ENCODE measurements at regions of chr12 and their contacts with region 1.

Region 1: DNA sequence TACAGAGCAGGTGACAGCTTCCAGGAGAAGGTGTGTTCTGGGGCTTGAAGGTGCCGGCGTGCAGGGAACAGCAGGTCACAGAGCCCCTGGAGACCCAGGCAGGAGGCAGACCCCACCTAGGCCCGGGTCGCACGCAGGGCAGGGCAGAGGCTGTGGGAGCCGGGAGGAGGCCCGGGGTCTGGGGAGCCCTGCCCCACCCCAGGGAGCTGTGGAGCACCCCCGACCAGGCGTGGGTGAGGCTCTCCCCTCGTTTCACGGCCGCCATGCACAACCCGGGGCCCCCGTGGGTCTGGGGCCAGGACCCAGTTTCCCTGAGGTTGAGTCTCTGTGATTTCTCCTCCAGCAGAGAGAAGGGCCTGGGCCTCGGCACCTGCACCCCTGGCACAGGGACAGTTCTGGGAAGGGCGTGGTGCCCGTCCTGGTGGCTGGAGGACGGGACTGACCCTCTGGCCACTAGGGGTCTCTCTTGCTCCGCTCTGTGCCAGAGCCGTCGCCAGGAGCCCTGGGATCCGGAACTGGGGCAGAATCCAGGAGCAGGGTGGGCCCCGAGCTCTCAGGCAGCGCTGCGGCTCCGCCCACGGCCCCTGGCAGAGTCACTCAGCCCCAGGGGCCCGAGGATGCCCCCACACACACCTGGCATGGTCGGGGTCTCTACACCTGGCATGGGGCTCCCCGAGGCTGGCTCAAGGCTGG is 75.2 kb upstream of the FBRSL1 start:
- DNase-seq: peak; percentile 80 to 88
- ATAC-seq: peak; percentile 87 to 98
- H3K4me3 ChIP-seq: no peak overlapping the region
- H3K27ac ChIP-seq: peak overlapping the region; percentile 65 to 85; a peak in 5 of 6 replicates
- H3K4me1 ChIP-seq: peaks cover 12% of the 10 kb centered on the region; the same call in 2 of the 3 replicates
- CTCF ChIP-seq: peak; percentile 94
- EP300 ChIP-seq: no peak
- POLR2A ChIP-seq: no peak
- RAD21 ChIP-seq: peak; percentile 98 to 99

Region 2: GRCh38 chr12:132162508-132163031 is 252.2 kb before region 1 on chr12:
- CTCF ChIA-PET with region 1: interaction called, 18 read pairs
- POLR2A ChIA-PET with region 1: no interaction called
- DNase-seq: no peak
- ATAC-seq: peak; percentile 31 to 67
- H3K4me3 ChIP-seq: no peak overlapping the region
- H3K27ac ChIP-seq: 0 out of 6 replicates have a peak overlapping the region, but pooled peaks of 1 of the 2 experiments have one; percentile 3
- H3K4me1 ChIP-seq: peaks cover 11% of the 10 kb centered on the region
- CTCF ChIP-seq: no peak
- EP300 ChIP-seq: no peak
- POLR2A ChIP-seq: no peak
- RAD21 ChIP-seq: no peak

Region 3: GRCh38 chr12:132285991-132286681 is 128.6 kb before region 1 on chr12:
- CTCF ChIA-PET with region 1: interaction called, 14 read pairs
- POLR2A ChIA-PET with region 1: no interaction called
- DNase-seq: peak in 1 of 2 experiments; percentile 56
- ATAC-seq: peak in 1 of 2 experiments; percentile 57; a peak in 3 of 6 replicates
- H3K4me3 ChIP-seq: no peak overlapping the region
- H3K27ac ChIP-seq: peak overlapping the region; percentile 30 to 80; a peak in 4 of 6 replicates
- H3K4me1 ChIP-seq: peaks cover 39% of the 10 kb centered on the region
- CTCF ChIP-seq: no peak
- EP300 ChIP-seq: no peak
- POLR2A ChIP-seq: no peak
- RAD21 ChIP-seq: no peak

Region 4: GRCh38 chr12:132393991-132394949 is 20.5 kb before region 1 on chr12:
- CTCF ChIA-PET with region 1: interaction called, 29 read pairs
- POLR2A ChIA-PET with region 1: no interaction called
- DNase-seq: peak; percentile 74 to 81
- ATAC-seq: peak; percentile 67 to 76
- H3K4me3 ChIP-seq: peak overlapping the region; percentile 7; the same call in 1 of the 3 replicates
- H3K27ac ChIP-seq: peak overlapping the region; percentile 84 to 86
- H3K4me1 ChIP-seq: peaks cover 34% of the 10 kb centered on the region
- CTCF ChIP-seq: no peak
- EP300 ChIP-seq: peak in 1 of 2 experiments; percentile 48; a peak in 2 of 5 replicates
- POLR2A ChIP-seq: no peak
- RAD21 ChIP-seq: no peak

Region 5: DNA sequence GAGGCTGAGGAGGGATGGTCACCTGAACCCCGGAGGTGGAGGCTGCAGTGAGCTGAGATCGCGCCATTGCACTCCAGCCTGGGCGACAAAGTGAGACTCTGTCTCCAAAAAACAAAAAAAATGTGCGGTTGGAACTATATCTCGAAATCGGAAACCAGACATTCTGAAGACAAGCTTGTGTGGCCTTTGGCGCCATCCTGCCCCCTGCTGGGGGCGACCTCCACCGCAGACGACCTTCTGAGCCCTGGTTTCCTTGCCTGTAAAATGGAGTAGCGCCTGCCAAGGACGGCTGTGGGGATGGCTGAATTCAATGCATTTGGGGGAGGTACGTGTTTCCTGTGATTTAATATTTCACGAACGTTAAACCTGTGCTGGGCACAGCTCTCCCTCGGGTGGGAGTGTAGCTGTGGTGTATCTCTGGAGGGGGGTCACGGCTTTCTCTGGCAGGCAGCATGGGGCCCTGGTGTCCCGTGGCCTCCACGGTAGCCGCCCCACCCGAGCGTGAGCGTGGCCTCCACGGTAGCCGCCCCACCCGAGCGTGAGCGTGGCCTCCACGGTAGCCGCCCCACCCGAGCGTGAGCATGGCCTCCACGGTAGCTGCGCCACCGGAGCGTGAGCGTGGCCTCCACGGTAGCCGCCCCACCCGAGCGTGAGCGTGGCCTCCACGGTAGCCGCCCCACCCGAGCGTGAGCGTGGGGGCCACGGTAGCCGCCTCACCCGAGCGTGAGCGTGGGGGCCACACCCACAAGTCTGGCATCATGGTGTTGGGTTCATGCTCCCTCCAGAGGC is 140.3 kb after region 1 on chr12:
- CTCF ChIA-PET with region 1: interaction called, 108 read pairs
- POLR2A ChIA-PET with region 1: no interaction called
- DNase-seq: peak; percentile 33 to 64
- ATAC-seq: peak in 1 of 2 experiments; percentile 33; a peak in 2 of 6 replicates
- H3K4me3 ChIP-seq: no peak overlapping the region
- H3K27ac ChIP-seq: no peak overlapping the region
- H3K4me1 ChIP-seq: 0 out of 3 replicates have a peak, but pooled peaks cover 2% of the 10 kb centered on the region
- CTCF ChIP-seq: peak; percentile 40; the same call in 2 of the 3 replicates
- EP300 ChIP-seq: no peak
- POLR2A ChIP-seq: no peak
- RAD21 ChIP-seq: peak; percentile 36 to 67; a peak in 4 of 5 replicates

Region 6: GRCh38 chr12:132585177-132585576 is 170.4 kb after region 1 on chr12:
- CTCF ChIA-PET with region 1: interaction called, 12 read pairs
- POLR2A ChIA-PET with region 1: no interaction called
- DNase-seq: no peak
- ATAC-seq: no peak
- H3K4me3 ChIP-seq: no peak overlapping the region
- H3K27ac ChIP-seq: no peak overlapping the region
- H3K4me1 ChIP-seq: no peaks in the 10 kb centered on the region
- CTCF ChIP-seq: no peak
- EP300 ChIP-seq: no peak
- POLR2A ChIP-seq: no peak
- RAD21 ChIP-seq: no peak

Region 7: GRCh38 chr12:132638541-132639418 is 224.0 kb after region 1 on chr12:
- CTCF ChIA-PET with region 1: interaction called, 87 read pairs
- POLR2A ChIA-PET with region 1: no interaction called
- DNase-seq: peak; percentile 67 to 71
- ATAC-seq: peak; percentile 75 to 84
- H3K4me3 ChIP-seq: no peak overlapping the region
- H3K27ac ChIP-seq: no peak overlapping the region
- H3K4me1 ChIP-seq: no peaks in the 10 kb centered on the region
- CTCF ChIP-seq: peak; percentile 80
- EP300 ChIP-seq: no peak
- POLR2A ChIP-seq: no peak
- RAD21 ChIP-seq: peak; percentile 45 to 48

Measured in A549 (cell line).